ENCODE measurements at regions of chr1 and their contacts with region 1.

Region 1: GRCh38 chr1:182446033-182446669 is 3.8 kb upstream of the RGSL1 start:
- DNase-seq: no peak
- ATAC-seq: peak in 1 of 2 donors; percentile 39

Region 2: DNA sequence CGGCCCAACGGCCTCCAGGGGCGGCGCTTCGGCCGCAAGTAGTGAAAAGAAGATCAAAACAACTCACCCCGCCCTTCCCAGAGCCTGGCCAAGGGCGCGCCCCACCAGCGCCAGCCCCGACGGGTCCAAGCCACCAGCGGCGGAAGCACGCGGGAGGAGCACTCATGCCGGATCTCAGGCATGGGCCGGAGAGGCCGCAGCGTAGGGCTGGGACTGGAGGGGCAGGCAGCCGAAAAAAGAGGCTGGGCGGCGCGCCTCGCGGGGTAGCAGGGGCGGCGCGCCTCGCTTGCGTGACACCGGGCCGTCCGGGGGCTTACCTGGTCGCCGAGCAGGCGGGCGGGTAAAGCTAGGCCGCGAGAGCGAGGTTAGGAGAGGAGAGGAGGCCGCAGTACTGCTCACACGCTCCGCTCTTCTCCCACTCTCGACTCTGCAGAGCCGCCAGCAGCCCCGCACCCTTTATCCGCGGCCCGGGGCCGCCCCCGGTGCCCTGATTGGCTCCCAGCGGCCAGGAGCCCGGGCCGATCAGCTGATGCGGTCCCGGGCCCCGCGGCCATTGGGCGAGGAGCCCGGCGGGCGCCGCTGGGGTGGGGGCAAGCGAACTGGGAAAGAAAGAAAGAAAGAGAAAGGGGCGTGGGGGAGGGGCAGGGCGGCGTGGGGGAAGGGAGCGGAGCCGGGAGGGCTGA is 54.6 kb before region 1 on chr1 and contains the start of gene GLUL:
- intact Hi-C with region 1: no loop called
- DNase-seq: peak; percentile 93
- ATAC-seq: peak; percentile 93 to 95
- total RNA-seq, gene GLUL: 462 to 760 TPM

Region 3: GRCh38 chr1:182589931-182590330 is 143.8 kb after region 1 on chr1:
- intact Hi-C with region 1: loop called (anchors 5 to 10 kb)
- DNase-seq: no peak
- ATAC-seq: no peak

Region 4: GRCh38 chr1:182595641-182596240 is 149.6 kb after region 1 on chr1:
- intact Hi-C with region 1: loop called (anchors 5 to 10 kb)
- DNase-seq: peak; percentile 66
- ATAC-seq: peak; percentile 76 to 85

Region 5: GRCh38 chr1:182781841-182782586 is 335.9 kb after region 1 on chr1:
- intact Hi-C with region 1: loop called (anchors 5 to 10 kb)
- DNase-seq: peak; percentile 68
- ATAC-seq: peak; percentile 74 to 78

Region 6: GRCh38 chr1:182789138-182790076 is 343.3 kb after region 1 on chr1 and contains the start of gene NPL:
- intact Hi-C with region 1: loop called (anchors 5 to 10 kb)
- DNase-seq: peak; percentile 88
- ATAC-seq: peak; percentile 98 to 99
- total RNA-seq, gene NPL: 6.7 to 16.7 TPM